GM10248 (cell line): ENCODE measurements at regions of chr20 and their contacts with region 1.

Region 1: DNA sequence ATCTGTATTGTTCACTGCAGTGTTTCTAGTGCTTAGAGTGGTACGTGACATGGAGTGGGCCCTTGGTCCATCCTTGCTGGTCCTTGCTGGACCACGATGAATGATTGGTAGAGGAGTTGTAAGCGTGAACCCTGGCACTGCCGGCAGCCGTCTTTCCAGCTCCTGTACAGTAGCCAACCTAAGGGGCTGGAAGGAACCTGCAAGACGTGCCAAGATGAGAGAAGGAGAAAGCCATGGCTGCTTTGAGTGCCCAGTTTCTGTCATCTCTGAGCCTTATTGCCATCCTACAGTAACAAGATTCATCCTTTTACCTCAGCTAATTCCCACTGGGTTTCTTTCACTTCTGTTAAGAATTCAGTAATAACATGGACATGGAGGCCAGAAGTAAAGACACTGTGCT is 5.9 kb downstream of the DHX35 start:
- DNase-seq: no peak
- CTCF ChIP-seq: no peak

Region 2: GRCh38 chr20:38229376-38230252 is 738.5 kb before region 1 on chr20:
- CTCF ChIA-PET with region 1: no interaction called
- POLR2A ChIA-PET with region 1: no interaction called
- DNase-seq: peak; percentile 50
- CTCF ChIP-seq: peak; percentile 34

Region 3: DNA sequence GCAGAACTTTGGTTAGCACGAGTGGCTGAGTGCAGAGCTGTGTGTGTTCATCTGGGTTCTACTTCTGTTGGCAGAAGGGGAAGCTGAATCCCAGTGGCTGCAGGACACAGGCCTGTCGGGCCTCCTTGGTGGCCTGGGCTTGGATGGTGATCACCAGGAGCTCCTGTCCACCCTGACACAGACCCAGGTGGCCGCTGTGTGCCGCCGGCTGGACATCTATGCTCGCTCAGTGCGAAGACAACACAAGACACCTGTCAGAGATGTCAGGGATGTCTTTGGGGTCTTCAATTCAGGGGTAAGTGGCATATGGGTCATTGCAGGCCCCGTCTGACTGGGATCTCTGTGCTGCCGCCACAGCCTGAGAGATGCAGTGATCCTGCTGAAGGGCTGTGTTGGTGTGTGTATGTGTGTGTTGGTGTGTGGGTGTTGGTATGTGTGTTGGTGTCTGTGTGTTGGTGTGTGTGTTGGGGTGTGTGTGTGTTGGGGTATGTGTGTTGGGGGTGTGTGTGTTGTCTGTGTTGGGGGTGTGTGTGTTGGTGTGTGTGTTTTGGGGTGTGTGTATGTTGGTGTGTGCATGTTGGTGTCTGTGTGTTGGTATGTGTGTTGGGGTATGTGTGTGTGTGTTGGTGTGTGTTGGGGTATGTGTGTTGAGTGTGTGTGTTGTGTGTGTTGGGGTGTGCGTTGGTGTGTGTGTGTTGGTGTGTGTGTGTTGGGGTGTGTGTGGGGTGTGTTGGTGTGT is 341.0 kb before region 1 on chr20:
- CTCF ChIA-PET with region 1: no interaction called
- POLR2A ChIA-PET with region 1: no interaction called
- DNase-seq: no peak
- CTCF ChIP-seq: no peak

Region 4: DNA sequence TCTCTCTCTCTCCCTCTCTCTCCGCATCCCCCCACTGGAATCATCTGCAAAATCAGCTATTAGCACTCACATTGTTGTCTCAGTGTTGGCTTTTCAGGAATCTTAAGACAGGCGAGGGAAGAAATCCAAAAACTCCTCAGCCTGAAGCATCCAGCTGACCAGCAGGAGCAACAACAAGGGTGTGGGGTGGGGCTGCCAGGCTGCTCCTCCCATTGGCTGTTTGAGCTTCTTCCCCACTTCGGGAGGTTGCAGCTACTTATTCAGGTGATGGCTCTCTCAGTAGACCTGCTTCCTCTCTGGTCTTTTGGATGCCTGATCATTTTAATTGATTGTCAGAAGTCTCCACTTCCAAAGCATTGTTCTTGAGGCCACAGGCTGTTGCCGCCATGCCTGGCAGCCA is 267.9 kb before region 1 on chr20:
- CTCF ChIA-PET with region 1: no interaction called
- POLR2A ChIA-PET with region 1: no interaction called
- DNase-seq: no peak
- CTCF ChIP-seq: no peak

Region 5: DNA sequence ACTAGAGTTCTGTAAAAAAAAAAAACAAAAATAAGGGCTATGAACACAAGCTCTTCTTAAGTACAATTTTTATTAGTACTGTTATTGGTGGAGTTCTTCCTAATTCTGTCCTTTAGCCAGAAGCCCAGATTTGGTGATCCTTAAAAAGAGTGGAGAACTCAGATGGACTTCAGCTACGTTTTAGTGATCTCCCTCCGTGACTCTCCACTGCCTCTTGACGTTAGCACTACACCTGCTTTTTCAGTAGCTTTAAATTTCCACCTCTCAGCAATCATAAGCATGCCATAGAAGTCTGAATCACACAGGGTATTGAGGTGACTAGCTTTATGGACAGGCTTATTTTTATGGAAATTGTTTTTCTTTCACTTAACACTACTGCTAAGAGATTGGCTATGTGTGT is 11.8 kb after region 1 on chr20:
- CTCF ChIA-PET with region 1: interaction called, 22 read pairs
- POLR2A ChIA-PET with region 1: no interaction called
- DNase-seq: no peak
- CTCF ChIP-seq: no peak

Region 6: GRCh38 chr20:39021748-39022147 is 53.7 kb after region 1 on chr20:
- CTCF ChIA-PET with region 1: no interaction called
- POLR2A ChIA-PET with region 1: no interaction called
- DNase-seq: no peak
- CTCF ChIP-seq: no peak